Cardiac septum (tissue), 1 donor: ENCODE measurements at regions of chr5 and their contacts with region 1.

Region 1: GRCh38 chr5:37837414-37838032 is 2.3 kb downstream of the GDNF start:
- DNase-seq: no peak

Region 2: DNA sequence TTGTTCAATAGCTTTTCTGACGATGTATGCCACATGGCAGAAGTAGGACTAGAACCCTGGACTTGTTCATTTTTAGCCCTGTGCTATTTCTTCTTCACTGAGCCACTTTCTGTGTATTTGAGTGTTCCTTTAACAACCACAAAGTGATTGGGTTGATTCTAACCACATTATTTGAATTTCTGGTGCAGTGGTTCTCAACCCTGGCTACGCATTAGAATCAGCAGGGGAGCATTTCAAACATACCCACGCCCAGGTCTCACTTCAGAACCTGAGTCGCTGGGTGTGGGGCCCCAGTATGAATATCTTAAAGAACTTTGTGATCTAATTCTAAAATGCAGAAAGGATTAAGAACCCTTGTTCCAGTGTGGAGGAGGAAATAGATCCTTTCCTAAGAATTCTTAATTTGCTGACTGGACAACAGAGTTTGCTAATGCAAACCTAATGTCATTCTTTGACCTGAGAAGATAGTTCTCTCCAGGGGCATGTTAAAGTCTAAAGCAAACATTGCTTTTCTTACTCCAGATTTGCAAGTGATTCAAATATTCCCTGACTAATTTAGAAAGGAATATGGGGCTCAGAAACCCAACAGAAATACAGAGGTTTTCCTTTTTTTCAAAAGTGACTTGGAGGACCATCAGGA is 77.7 kb after region 1 on chr5:
- intact Hi-C with region 1: loop called (anchors 5 kb)
- DNase-seq: no peak

Region 3: GRCh38 chr5:38193015-38193581 is 355.6 kb after region 1 on chr5:
- intact Hi-C with region 1: loop called (anchors 1 kb)
- DNase-seq: peak; percentile 80

Region 4: GRCh38 chr5:39092581-39093350 is 1255.2 kb after region 1 on chr5:
- intact Hi-C with region 1: no loop called
- DNase-seq: no peak